ENCODE measurements at regions of chr9 and their contacts with region 1.

Region 1: GRCh38 chr9:24602693-24603352 is 57.1 kb upstream of the IZUMO3 start:
- DNase-seq: no peak
- H3K4me3 ChIP-seq: no peak overlapping the region
- H3K27ac ChIP-seq: no peak overlapping the region
- H3K4me1 ChIP-seq: no peaks in the 10 kb centered on the region
- CTCF ChIP-seq: no peak

Region 2: DNA sequence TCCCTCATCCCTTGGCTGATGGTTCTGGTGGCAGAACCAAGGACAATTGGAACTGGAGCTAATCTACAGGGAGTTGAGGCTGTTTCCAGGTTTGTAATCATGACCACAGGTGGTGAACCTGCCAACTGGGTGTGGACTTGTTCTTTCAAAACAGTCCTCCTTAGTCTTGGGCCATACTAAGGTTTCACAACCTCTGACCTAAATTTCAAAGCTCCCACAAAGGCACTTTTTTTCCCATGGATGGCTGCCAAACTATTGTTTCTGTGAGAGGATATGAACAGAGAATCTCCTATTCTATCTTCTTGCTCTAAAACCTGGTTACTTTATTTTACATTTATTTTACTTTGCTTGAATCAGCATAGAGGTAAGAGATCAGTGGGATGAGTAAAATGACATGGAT is 49.4 kb after region 1 on chr9:
- CTCF ChIA-PET with region 1: no interaction called
- POLR2A ChIA-PET with region 1: interaction called, 3 read pairs
- intact Hi-C with region 1: loop called (anchors 10 kb)
- DNase-seq: no peak
- H3K4me3 ChIP-seq: no peak overlapping the region
- H3K27ac ChIP-seq: no peak overlapping the region
- H3K4me1 ChIP-seq: no peaks in the 10 kb centered on the region
- CTCF ChIP-seq: no peak

Measured in OCI-LY7 (cell line).